ENCODE measurements at regions of chr5 and their contacts with region 1.

Region 1: DNA sequence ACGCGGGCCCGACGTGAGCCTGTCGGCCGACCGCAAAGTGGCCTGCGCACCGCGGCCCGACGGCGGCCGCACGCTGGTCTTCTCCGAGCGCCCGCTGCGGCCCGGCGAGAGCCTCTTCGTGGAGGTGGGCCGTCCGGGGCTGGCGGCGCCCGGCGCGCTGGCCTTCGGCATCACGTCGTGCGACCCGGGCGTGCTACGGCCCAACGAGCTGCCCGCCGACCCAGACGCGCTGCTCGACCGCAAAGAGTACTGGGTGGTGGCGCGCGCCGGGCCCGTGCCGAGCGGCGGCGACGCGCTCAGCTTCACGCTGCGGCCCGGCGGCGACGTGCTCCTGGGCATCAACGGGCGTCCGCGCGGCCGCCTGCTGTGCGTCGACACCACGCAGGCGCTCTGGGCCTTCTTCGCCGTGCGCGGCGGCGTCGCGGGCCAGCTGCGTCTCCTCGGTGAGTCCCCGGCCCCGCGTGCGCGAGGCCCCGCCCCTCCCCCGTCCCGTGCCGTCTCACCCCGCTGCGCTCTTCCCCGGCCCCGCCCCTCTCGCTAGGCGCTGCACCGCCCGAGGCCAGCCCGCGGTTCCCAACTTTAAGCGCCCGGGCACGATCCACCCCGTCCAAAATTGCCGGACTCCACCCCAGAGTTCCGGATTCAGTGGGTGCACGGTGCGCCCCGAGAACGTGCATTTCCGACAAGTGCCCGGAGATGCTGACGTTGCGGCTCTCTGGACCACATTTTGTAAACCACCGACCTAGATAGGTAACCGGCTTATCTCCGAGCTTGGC is 42.8 kb downstream of the NEURL1B start:
- DNase-seq: peak; percentile 80
- ATAC-seq: peak; percentile 83
- H3K4me3 Mint-ChIP-seq: peak overlapping the region; percentile 54
- H3K27ac Mint-ChIP-seq: no peak overlapping the region
- H3K4me1 Mint-ChIP-seq: peaks cover 15% of the 10 kb centered on the region
- H3K27me3 Mint-ChIP-seq: peaks cover 4% of the 10 kb centered on the region

Region 2: DNA sequence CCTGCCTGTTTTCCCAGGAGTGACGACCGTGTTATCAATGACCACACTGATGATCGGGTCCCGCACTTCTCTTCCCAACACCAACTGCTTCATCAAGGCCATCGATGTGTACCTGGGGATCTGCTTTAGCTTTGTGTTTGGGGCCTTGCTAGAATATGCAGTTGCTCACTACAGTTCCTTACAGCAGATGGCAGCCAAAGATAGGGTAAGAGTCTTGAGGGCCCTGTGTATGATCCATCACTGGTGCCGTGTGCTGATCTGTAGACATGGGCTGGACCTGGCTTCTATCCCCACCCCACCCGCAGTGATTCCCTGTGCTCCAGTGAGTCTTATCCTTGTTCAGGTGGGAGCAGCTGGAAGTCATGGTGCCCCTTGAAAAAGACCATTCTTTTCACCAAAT is 1874.3 kb before region 1 on chr5:
- CTCF ChIA-PET with region 1: no interaction called
- POLR2A ChIA-PET with region 1: no interaction called
- intact Hi-C with region 1: no loop called
- DNase-seq: no peak
- ATAC-seq: no peak
- H3K4me3 Mint-ChIP-seq: no peak overlapping the region
- H3K27ac Mint-ChIP-seq: no peak overlapping the region
- H3K4me1 Mint-ChIP-seq: no peaks in the 10 kb centered on the region
- H3K27me3 Mint-ChIP-seq: peaks cover 17% of the 10 kb centered on the region

Region 3: DNA sequence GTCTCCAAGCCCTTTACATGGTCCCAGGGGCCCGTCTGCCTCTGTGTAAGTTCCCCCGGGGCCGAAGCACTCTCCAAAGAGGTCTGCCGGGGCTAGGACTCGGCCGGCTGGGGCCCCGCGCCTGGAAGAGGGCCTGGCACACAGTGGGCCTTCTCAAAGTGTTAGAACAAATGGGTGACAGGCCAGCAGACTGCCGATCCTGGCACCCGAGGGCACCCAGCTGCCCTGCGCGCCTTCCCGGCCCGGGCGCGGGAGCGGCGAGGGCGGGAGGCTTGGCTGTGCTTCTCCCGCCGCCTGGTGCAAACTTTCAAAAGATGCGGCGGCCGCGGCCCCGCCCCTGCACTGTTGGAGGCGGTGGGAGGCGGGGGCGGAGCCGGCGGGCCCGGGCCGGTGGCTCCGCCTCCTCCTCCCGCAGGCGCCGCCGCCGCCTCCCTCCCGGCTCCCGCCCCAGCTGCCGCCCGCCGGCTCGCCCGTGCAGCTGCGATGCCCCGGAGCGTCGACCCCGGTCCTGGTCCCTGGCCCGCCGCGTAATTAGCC is 43.0 kb before region 1 on chr5 and contains the start of gene NEURL1B:
- CTCF ChIA-PET with region 1: no interaction called
- POLR2A ChIA-PET with region 1: no interaction called
- intact Hi-C with region 1: loop called in 1 of 2 experiments (anchors 1 kb)
- DNase-seq: peak; percentile 75
- ATAC-seq: peak; percentile 86
- H3K4me3 Mint-ChIP-seq: no peak within 1 kb of the TSS
- H3K27ac Mint-ChIP-seq: no peak within 1 kb of the TSS
- H3K4me1 Mint-ChIP-seq: no peaks in the 10 kb centered on the region
- H3K27me3 Mint-ChIP-seq: peaks cover 38% of the 10 kb centered on the region
- total RNA-seq, gene NEURL1B: 0.16 to 0.19 TPM

Measured in activated CD4-positive, alpha-beta T cell treated with anti-CD3 and anti-CD28 coated beads for 36 hours (primary cell).